GM10248 (cell line): ENCODE measurements at regions of chr9 and their contacts with region 1.

Region 1: GRCh38 chr9:27261517-27262211 is 35.3 kb downstream of the EQTN start:
- DNase-seq: no peak
- CTCF ChIP-seq: no peak

Region 2: DNA sequence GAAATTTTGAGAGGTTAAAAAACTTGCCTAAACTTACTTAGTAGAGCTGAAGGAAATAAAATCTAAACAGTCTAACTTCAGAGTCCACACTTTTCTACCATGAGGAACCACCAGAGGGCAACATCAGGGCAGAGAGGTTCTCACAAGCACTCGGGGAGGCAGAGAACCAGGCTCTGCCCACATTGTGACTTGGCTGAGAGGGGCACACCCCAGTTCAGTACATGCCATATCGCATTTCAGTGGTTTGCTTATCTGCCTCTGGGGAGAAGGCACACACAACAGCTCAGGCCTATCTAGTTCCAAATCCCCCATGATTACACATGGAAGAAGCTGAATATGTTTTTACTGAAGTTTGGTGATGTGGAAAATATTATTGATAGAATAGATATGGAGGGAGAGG is 13.9 kb before region 1 on chr9:
- CTCF ChIA-PET with region 1: interaction called, 19 read pairs
- POLR2A ChIA-PET with region 1: no interaction called
- DNase-seq: peak; percentile 38
- CTCF ChIP-seq: peak; percentile 52

Region 3: DNA sequence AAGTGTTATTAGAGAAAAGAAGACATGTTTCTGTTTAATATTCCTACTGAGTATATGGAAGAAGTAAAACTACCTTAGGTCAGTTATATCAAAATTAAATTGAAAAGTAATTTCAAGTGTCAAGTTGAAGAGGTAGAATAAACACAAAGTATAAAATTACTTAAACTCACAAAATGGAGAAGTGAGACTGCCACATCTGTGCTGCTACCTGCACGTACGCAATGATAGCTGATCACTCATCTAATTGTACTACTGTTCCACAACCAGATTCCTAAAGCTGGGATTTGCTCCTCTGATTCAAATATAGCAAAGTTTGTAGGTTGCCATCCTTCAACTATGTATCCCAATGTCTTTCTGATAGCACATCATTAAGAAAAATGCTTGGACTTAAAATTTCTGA is 10.4 kb after region 1 on chr9:
- CTCF ChIA-PET with region 1: interaction called, 13 read pairs
- POLR2A ChIA-PET with region 1: no interaction called
- DNase-seq: no peak
- CTCF ChIP-seq: no peak

Region 4: GRCh38 chr9:27785714-27786100 is 524.0 kb after region 1 on chr9:
- CTCF ChIA-PET with region 1: no interaction called
- POLR2A ChIA-PET with region 1: no interaction called
- DNase-seq: no peak
- CTCF ChIP-seq: no peak